HEK293 (cell line): ENCODE measurements at regions of chr13 and their contacts with region 1.

Region 1: GRCh38 chr13:79401259-79402070 is 4.6 kb downstream of the RBM26 start:
- H3K4me3 ChIP-seq: no peak overlapping the region
- H3K27ac ChIP-seq: no peak overlapping the region
- H3K4me1 ChIP-seq: no peaks in the 10 kb centered on the region; the same call in 1 of the 2 replicates
- CTCF ChIP-seq: no peak

Region 2: GRCh38 chr13:78700121-78700910 is 701.1 kb before region 1 on chr13:
- CTCF ChIA-PET with region 1: interaction called, 10 read pairs
- POLR2A ChIA-PET with region 1: no interaction called
- H3K4me3 ChIP-seq: no peak overlapping the region
- H3K27ac ChIP-seq: no peak overlapping the region
- H3K4me1 ChIP-seq: no peaks in the 10 kb centered on the region
- CTCF ChIP-seq: no peak